Gastrocnemius medialis (tissue), 4 donors: ENCODE measurements at regions of chr5 and their contacts with region 1.

Region 1: GRCh38 chr5:62534461-62535236 is 44.0 kb upstream of the LRRC70 start:
- DNase-seq: no peak
- ATAC-seq: no peak
- H3K4me3 ChIP-seq: no peak overlapping the region
- H3K27ac ChIP-seq: no peak overlapping the region
- H3K4me1 ChIP-seq: no peaks in the 10 kb centered on the region
- H3K27me3 ChIP-seq: no peaks in the 10 kb centered on the region
- CTCF ChIP-seq: no peak
- POLR2A ChIP-seq: no peak

Region 2: DNA sequence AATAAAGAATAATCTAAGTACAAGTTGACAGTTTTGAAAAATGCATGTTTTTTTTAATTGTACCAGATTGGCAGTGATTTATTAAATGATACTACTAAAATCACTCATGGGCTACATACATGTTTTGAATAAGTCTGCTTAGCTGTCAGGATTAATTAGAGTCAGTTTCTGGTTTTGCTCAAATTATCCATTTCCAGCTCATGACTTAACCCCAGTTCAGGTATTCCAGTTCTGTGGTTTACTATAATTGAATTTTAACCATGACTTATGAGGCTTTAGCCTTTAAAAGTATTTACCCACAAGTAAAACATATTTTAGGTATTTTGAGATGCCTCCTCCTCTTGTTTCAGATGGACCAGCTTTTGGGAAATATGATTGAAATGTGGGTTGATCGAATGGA is 26.1 kb after region 1 on chr5:
- in situ Hi-C with region 1: no loop called
- intact Hi-C with region 1: loop called (anchors 2 kb)
- DNase-seq: no peak
- ATAC-seq: no peak
- H3K4me3 ChIP-seq: no peak overlapping the region
- H3K27ac ChIP-seq: no peak overlapping the region
- H3K4me1 ChIP-seq: peaks cover 0 to 6% of the 10 kb centered on the region in 2 donors
- H3K27me3 ChIP-seq: no peaks in the 10 kb centered on the region
- CTCF ChIP-seq: no peak
- POLR2A ChIP-seq: no peak